CD4-positive, alpha-beta memory T cell (primary cell): ENCODE measurements at regions of chr17 and their contacts with region 1.

Region 1: GRCh38 chr17:4220655-4221054 is 43.1 kb downstream of the ANKFY1 start:
- DNase-seq: no peak
- H3K4me3 ChIP-seq: no peak overlapping the region
- H3K4me3 Mint-ChIP-seq: no peak overlapping the region
- H3K27ac ChIP-seq: no peak overlapping the region
- H3K27ac Mint-ChIP-seq: no peak overlapping the region
- H3K4me1 ChIP-seq: no peaks in the 10 kb centered on the region
- H3K4me1 Mint-ChIP-seq: peaks cover under 1 to 4% (median 1%) of the 10 kb centered on the region in 4 donors
- H3K27me3 ChIP-seq: no peaks in the 10 kb centered on the region
- H3K27me3 Mint-ChIP-seq: no peaks in the 10 kb centered on the region

Region 2: GRCh38 chr17:4175921-4176807 is 44.5 kb before region 1 on chr17:
- CTCF ChIA-PET with region 1: no interaction called
- POLR2A ChIA-PET with region 1: no interaction called
- intact Hi-C with region 1: no loop called
- DNase-seq: peak; percentile 58 to 68 (median 63)
- H3K4me3 ChIP-seq: peak overlapping the region; percentile 1 to 47
- H3K4me3 Mint-ChIP-seq: peak overlapping the region; percentile 74 to 91 (median 82)
- H3K27ac ChIP-seq: peak overlapping the region; percentile 74
- H3K27ac Mint-ChIP-seq: peak overlapping the region; percentile 86 to 99 (median 98)
- H3K4me1 ChIP-seq: peaks cover 54% of the 10 kb centered on the region
- H3K4me1 Mint-ChIP-seq: peaks cover 41 to 64% (median 46%) of the 10 kb centered on the region in 4 donors
- H3K27me3 ChIP-seq: no peaks in the 10 kb centered on the region
- H3K27me3 Mint-ChIP-seq: no peaks in the 10 kb centered on the region

Region 3: DNA sequence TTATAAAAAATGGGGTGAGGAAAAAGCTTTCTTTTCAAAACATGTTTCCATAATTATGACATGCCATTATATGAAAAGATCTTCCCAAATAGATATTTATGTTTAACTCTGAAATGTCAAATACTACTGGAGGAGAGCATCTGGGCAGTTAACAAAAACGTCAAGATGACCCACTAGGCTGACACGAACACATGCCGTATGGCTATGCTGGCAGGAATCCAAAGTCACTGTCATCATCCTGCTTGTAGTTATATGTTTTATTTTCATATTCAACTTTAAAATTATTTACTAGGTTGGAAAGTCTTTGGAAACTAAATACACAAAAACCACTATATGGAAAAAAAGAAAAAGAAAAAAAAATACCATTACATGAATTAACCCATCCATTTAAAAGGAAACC is 15.8 kb after region 1 on chr17:
- CTCF ChIA-PET with region 1: interaction called, 11 read pairs
- POLR2A ChIA-PET with region 1: no interaction called
- intact Hi-C with region 1: no loop called
- DNase-seq: no peak
- H3K4me3 ChIP-seq: no peak overlapping the region
- H3K4me3 Mint-ChIP-seq: no peak overlapping the region
- H3K27ac ChIP-seq: no peak overlapping the region
- H3K27ac Mint-ChIP-seq: no peak overlapping the region
- H3K4me1 ChIP-seq: peaks cover 21% of the 10 kb centered on the region
- H3K4me1 Mint-ChIP-seq: peaks cover 14 to 31% (median 19%) of the 10 kb centered on the region in 4 donors
- H3K27me3 ChIP-seq: no peaks in the 10 kb centered on the region
- H3K27me3 Mint-ChIP-seq: no peaks in the 10 kb centered on the region

Region 4: GRCh38 chr17:4263282-4264215 is 42.9 kb after region 1 on chr17 and contains the start of gene ANKFY1:
- CTCF ChIA-PET with region 1: interaction called, 8 read pairs
- POLR2A ChIA-PET with region 1: no interaction called
- intact Hi-C with region 1: loop called (anchors 5 kb)
- DNase-seq: peak; percentile 96 to 99 (median 98)
- H3K4me3 ChIP-seq: peak within 1 kb of the TSS; percentile 74 to 86
- H3K4me3 Mint-ChIP-seq: peak within 1 kb of the TSS; percentile 91 to 98 (median 94)
- H3K27ac ChIP-seq: peak within 1 kb of the TSS; percentile 87
- H3K27ac Mint-ChIP-seq: peak within 1 kb of the TSS; percentile 91 to 97 (median 96)
- H3K4me1 ChIP-seq: peaks cover 37% of the 10 kb centered on the region
- H3K4me1 Mint-ChIP-seq: peaks cover 32 to 50% (median 39%) of the 10 kb centered on the region in 4 donors
- H3K27me3 ChIP-seq: no peaks in the 10 kb centered on the region
- H3K27me3 Mint-ChIP-seq: no peaks in the 10 kb centered on the region
- total RNA-seq, gene ANKFY1: 72.7 to 74.7 TPM

Region 5: DNA sequence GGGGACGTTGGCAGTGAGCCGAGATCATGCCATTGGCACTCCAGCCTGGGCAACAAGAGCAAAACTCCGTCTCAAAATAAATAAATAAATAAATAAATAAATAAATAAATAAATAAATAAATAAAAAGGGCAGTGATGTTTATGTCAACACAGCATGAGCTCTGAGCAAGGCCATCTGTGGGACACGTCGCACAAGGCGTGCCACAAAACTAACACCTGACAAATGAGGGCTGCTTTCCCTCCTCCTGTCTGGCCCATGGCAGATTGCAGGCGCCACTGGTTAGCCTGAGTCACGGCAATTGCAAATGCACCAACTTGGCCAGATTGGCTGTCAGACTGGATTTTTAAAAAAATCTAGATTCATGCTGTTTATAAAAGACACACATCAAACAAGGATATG is 187.2 kb after region 1 on chr17:
- CTCF ChIA-PET with region 1: interaction called, 215 read pairs
- POLR2A ChIA-PET with region 1: interaction called, 11 read pairs
- intact Hi-C with region 1: loop called (anchors 1 kb)
- DNase-seq: no peak
- H3K4me3 ChIP-seq: no peak overlapping the region
- H3K4me3 Mint-ChIP-seq: no peak overlapping the region
- H3K27ac ChIP-seq: no peak overlapping the region
- H3K27ac Mint-ChIP-seq: peak overlapping the region in 1 of 7 donors; percentile 46
- H3K4me1 ChIP-seq: peaks cover 1% of the 10 kb centered on the region
- H3K4me1 Mint-ChIP-seq: peaks cover under 1 to 2% (median 1%) of the 10 kb centered on the region in 4 donors
- H3K27me3 ChIP-seq: no peaks in the 10 kb centered on the region
- H3K27me3 Mint-ChIP-seq: no peaks in the 10 kb centered on the region

Region 6: DNA sequence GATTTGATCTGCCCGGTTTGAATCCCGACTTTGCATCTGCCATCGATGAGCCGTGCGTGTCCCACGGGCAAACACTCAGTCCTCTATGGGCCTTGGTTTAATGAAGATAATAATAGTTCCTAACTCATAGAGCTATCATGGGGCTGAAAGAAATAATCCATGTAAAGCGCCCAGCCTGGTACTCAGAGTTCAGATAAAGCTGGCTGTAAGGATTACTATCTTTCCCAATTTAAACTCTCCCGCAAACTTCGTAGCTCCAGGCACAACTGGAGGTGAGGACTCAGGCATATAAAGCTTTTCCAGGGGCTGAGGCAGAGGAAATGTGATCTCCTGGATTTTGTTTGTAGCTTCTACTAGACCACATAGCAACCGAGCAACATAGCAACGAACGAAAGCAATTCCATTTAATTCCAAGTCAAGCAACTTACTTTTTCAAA is 404.5 kb after region 1 on chr17:
- CTCF ChIA-PET with region 1: interaction called, 3 read pairs
- POLR2A ChIA-PET with region 1: no interaction called
- intact Hi-C with region 1: loop called (anchors 10 kb)
- DNase-seq: no peak
- H3K4me3 ChIP-seq: no peak overlapping the region
- H3K4me3 Mint-ChIP-seq: no peak overlapping the region
- H3K27ac ChIP-seq: no peak overlapping the region
- H3K27ac Mint-ChIP-seq: no peak overlapping the region
- H3K4me1 ChIP-seq: no peaks in the 10 kb centered on the region
- H3K4me1 Mint-ChIP-seq: no peaks in the 10 kb centered on the region
- H3K27me3 ChIP-seq: no peaks in the 10 kb centered on the region
- H3K27me3 Mint-ChIP-seq: peaks cover 3 to 8% of the 10 kb centered on the region in 2 donors